ENCODE measurements at regions of chr12 and their contacts with region 1.

Region 1: GRCh38 chr12:38138225-38139221 is 178.1 kb upstream of the ALG10B start:
- DNase-seq: peak; percentile 78
- H3K4me3 ChIP-seq: peak overlapping the region in 7 of 8 donors; percentile 9 to 57 (median 16)
- H3K27ac ChIP-seq: no peak overlapping the region
- H3K4me1 ChIP-seq: peaks cover 6 to 14% (median 12%) of the 10 kb centered on the region in 6 donors
- H3K27me3 ChIP-seq: peaks cover 0 to 21% (median 9%) of the 10 kb centered on the region in 7 donors
- CTCF ChIP-seq: peak; percentile 89 to 96 (median 93)
- POLR2A ChIP-seq: no peak

Region 2: GRCh38 chr12:38316391-38317129 is 178.0 kb after region 1 on chr12 and contains the start of gene ALG10B:
- intact Hi-C with region 1: loop called (anchors 10 kb)
- DNase-seq: peak; percentile 95
- H3K4me3 ChIP-seq: peak within 1 kb of the TSS; percentile 37 to 73 (median 58)
- H3K27ac ChIP-seq: peak within 1 kb of the TSS; percentile 80 to 88 (median 86)
- H3K4me1 ChIP-seq: peaks cover 0 to 35% (median 12%) of the 10 kb centered on the region in 6 donors
- H3K27me3 ChIP-seq: no peaks in the 10 kb centered on the region
- CTCF ChIP-seq: peak; percentile 48 to 89 (median 77)
- POLR2A ChIP-seq: no peak
- total RNA-seq, gene ALG10B: 6.7 to 13.9 (median 10.6) TPM

Measured in spleen (tissue), 13 donors.